H1 (cell line): ENCODE measurements at regions of chr11 and their contacts with region 1.

Region 1: GRCh38 chr11:7592711-7593110 is 78.9 kb downstream of the PPFIBP2 start:
- DNase-seq: no peak
- H3K4me3 ChIP-seq: no peak overlapping the region
- H3K27ac ChIP-seq: no peak overlapping the region
- H3K4me1 ChIP-seq: peaks cover 0 to 9% (median 7%) of the 10 kb centered on the region in 4 experiments; a peak in 4 of 7 replicates
- H3K27me3 ChIP-seq: no peaks in the 10 kb centered on the region
- CTCF ChIP-seq: no peak
- EP300 ChIP-seq: no peak
- POLR2A ChIP-seq: no peak
- RAD21 ChIP-seq: no peak

Region 2: DNA sequence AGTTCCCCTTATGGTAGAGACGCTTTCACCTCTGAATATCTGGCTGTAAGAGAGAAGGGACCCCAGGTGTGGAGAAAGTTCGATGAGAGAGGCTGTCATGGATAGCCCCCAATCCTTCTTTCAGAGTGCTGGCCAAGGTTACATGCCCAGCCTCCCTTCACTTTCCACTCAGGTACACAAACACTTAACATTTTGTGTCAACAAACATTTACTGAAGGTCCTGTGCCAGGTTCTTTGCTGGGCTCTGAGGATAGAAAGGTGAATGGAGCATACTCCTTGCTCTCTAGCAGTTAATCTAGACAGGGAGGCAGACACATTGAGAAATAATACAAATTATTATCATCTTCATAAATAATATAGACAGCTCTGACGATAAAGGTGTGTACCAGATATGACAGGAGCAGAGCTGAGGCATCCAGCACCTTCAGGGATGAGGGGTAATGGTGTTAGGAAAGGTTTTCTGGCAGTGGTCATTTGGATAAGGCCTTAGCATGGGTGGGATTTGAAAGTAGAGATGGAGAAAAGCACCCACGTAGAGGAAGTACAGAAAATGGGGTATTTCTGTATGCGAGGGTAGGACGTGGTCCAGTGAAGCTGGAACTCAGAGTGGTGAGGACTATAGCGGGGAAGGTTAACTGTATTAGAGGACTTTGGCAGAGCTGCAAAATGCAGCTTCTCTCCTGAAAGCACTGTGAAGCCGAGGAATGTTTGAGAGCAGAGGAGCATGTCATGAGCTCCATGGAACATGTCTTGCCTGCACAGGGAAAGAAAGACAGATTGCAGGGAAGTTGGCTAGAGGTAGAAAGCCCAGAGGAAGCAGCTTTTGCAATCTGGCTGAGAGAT is 59.3 kb before region 1 on chr11:
- CTCF ChIA-PET with region 1: no interaction called
- POLR2A ChIA-PET with region 1: no interaction called
- DNase-seq: no peak
- H3K4me3 ChIP-seq: no peak overlapping the region
- H3K27ac ChIP-seq: no peak overlapping the region
- H3K4me1 ChIP-seq: no peaks in the 10 kb centered on the region; a peak in 2 of 7 replicates
- H3K27me3 ChIP-seq: no peaks in the 10 kb centered on the region
- CTCF ChIP-seq: no peak
- EP300 ChIP-seq: no peak
- POLR2A ChIP-seq: no peak
- RAD21 ChIP-seq: no peak

Region 3: DNA sequence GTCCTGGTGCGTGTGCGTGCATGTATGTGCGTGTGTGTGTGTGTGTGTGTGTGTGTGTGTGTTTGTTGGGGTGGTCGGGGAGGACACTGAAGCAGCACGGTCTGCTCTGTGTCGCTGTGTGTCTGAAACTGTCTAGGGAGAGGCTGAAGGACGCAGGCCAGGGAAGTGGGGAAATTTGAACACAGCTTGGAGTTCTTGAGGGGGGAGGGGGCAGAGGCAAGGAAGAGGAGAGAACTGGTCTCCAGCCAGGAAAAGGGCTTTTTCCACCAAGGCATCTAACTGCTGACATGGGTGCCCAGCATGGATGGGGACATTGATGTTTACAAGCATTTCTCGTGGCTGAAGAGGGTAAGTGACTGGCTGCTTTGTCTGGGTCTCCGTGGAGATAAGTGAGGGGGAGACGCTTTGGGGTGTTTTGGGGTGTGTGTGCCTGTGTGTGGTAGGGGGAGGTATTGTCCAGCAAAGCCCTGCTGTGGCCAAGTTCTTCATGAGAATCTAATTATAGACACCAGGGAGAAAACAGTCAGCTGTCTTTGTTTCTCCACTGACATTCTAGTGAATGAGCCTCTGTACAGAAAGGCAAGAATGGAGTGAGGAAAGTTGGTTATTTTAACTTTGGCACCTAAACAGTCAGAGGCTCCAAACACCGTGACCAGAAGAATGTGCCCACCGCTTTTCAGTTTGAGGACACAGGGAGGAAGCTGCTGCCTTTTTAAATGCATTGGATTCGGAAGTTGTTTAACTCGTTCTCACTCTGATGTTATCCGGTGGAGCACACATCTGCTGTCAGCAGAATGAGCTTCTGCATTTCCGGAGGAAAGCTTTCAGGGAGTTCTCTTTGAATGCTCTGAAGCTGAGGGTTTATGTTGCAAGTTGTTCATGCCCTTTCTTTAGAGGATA is 15.2 kb before region 1 on chr11:
- CTCF ChIA-PET with region 1: interaction called, 82 read pairs
- POLR2A ChIA-PET with region 1: interaction called, 5 read pairs
- DNase-seq: no peak
- H3K4me3 ChIP-seq: no peak overlapping the region
- H3K27ac ChIP-seq: peak overlapping the region; percentile 26; the same call in 1 of the 2 replicates
- H3K4me1 ChIP-seq: peaks cover 24 to 43% (median 33%) of the 10 kb centered on the region in 4 experiments
- H3K27me3 ChIP-seq: no peaks in the 10 kb centered on the region
- CTCF ChIP-seq: no peak
- EP300 ChIP-seq: no peak
- POLR2A ChIP-seq: no peak
- RAD21 ChIP-seq: no peak